Activated B cell treated with CpG ODN at 0.5 μM for 24 hours (primary cell): ENCODE measurements at regions of chr12 and their contacts with region 1.

Region 1: GRCh38 chr12:8890313-8891085 is 23.8 kb upstream of the PHC1 start:
- DNase-seq: no peak
- ATAC-seq: peak; percentile 87
- H3K4me3 Mint-ChIP-seq: peak overlapping the region; percentile 83
- H3K27ac Mint-ChIP-seq: peak overlapping the region; percentile 43
- H3K4me1 Mint-ChIP-seq: peaks cover 5% of the 10 kb centered on the region
- H3K27me3 Mint-ChIP-seq: peaks cover 2% of the 10 kb centered on the region
- CTCF ChIP-seq: peak; percentile 96

Region 2: GRCh38 chr12:8662593-8662992 is 227.9 kb before region 1 on chr12 and contains the start of gene MFAP5:
- CTCF ChIA-PET with region 1: interaction called, 9 read pairs
- POLR2A ChIA-PET with region 1: no interaction called
- intact Hi-C with region 1: loop called (anchors 1 kb)
- DNase-seq: no peak
- ATAC-seq: no peak
- H3K4me3 Mint-ChIP-seq: no peak within 1 kb of the TSS
- H3K27ac Mint-ChIP-seq: no peak within 1 kb of the TSS
- H3K4me1 Mint-ChIP-seq: peaks cover 4% of the 10 kb centered on the region
- H3K27me3 Mint-ChIP-seq: peaks cover 2% of the 10 kb centered on the region
- CTCF ChIP-seq: no peak
- total RNA-seq, gene MFAP5: 0.35 TPM in 1 of 2 replicates, not detected in the other

Region 3: GRCh38 chr12:8860165-8860961 is 30.1 kb before region 1 on chr12:
- CTCF ChIA-PET with region 1: interaction called, 14 read pairs
- POLR2A ChIA-PET with region 1: no interaction called
- intact Hi-C with region 1: no loop called
- DNase-seq: no peak
- ATAC-seq: peak; percentile 34
- H3K4me3 Mint-ChIP-seq: no peak overlapping the region
- H3K27ac Mint-ChIP-seq: no peak overlapping the region
- H3K4me1 Mint-ChIP-seq: no peaks in the 10 kb centered on the region
- H3K27me3 Mint-ChIP-seq: peaks cover 3% of the 10 kb centered on the region
- CTCF ChIP-seq: no peak

Region 4: GRCh38 chr12:8949342-8950220 is 59.1 kb after region 1 on chr12 and contains the start of gene M6PR:
- CTCF ChIA-PET with region 1: interaction called, 6 read pairs
- POLR2A ChIA-PET with region 1: no interaction called
- intact Hi-C with region 1: loop called (anchors 2 kb)
- DNase-seq: peak; percentile 89
- ATAC-seq: peak; percentile 82
- H3K4me3 Mint-ChIP-seq: peak within 1 kb of the TSS; percentile 99
- H3K27ac Mint-ChIP-seq: peak within 1 kb of the TSS; percentile 95
- H3K4me1 Mint-ChIP-seq: peaks cover 50% of the 10 kb centered on the region
- H3K27me3 Mint-ChIP-seq: no peaks in the 10 kb centered on the region
- CTCF ChIP-seq: no peak
- total RNA-seq, gene M6PR: 202 and 229 TPM in 2 replicates

Region 5: GRCh38 chr12:9049520-9050133 is 159.1 kb after region 1 on chr12:
- CTCF ChIA-PET with region 1: interaction called, 10 read pairs
- POLR2A ChIA-PET with region 1: no interaction called
- intact Hi-C with region 1: no loop called
- DNase-seq: no peak
- ATAC-seq: peak; percentile 60
- H3K4me3 Mint-ChIP-seq: no peak overlapping the region
- H3K27ac Mint-ChIP-seq: no peak overlapping the region
- H3K4me1 Mint-ChIP-seq: no peaks in the 10 kb centered on the region
- H3K27me3 Mint-ChIP-seq: peaks cover 6% of the 10 kb centered on the region
- CTCF ChIP-seq: no peak